ENCODE measurements at regions of chr18 and their contacts with region 1.

Region 1: GRCh38 chr18:13159579-13159978 is 59.0 kb upstream of the LDLRAD4 start:
- DNase-seq: peak; percentile 34
- ATAC-seq: peak; percentile 85
- H3K4me3 Mint-ChIP-seq: no peak overlapping the region
- H3K27ac Mint-ChIP-seq: no peak overlapping the region
- H3K4me1 Mint-ChIP-seq: peaks cover 2% of the 10 kb centered on the region
- H3K27me3 Mint-ChIP-seq: peaks cover 2% of the 10 kb centered on the region
- CTCF ChIP-seq: peak; percentile 92

Region 2: DNA sequence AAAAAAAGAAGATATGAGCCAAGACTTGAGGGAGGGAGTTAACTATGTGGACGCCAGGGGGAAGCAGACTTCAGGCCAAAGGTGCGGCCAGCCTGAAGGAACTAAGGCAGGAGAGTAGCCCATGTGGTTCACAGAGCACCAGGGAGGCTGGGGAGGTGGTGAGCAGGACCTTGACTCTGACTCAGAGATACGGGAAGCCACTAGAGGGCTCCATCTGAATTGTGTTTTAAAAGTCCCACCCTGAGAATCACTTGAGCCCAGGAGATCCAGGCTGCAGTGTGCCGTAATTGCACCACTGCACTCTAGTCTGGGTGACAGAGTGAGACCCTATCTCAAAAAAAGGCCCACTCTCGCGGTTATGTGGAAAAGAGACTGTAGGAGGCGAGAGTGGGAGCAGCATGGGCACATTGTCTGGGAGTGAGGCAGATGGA is 156.1 kb before region 1 on chr18:
- CTCF ChIA-PET with region 1: interaction called, 4 read pairs
- POLR2A ChIA-PET with region 1: no interaction called
- intact Hi-C with region 1: loop called (anchors 5 kb)
- DNase-seq: peak; percentile 44
- ATAC-seq: peak; percentile 52
- H3K4me3 Mint-ChIP-seq: no peak overlapping the region
- H3K27ac Mint-ChIP-seq: no peak overlapping the region
- H3K4me1 Mint-ChIP-seq: peaks cover 19% of the 10 kb centered on the region
- H3K27me3 Mint-ChIP-seq: no peaks in the 10 kb centered on the region
- CTCF ChIP-seq: peak; percentile 46

Region 3: DNA sequence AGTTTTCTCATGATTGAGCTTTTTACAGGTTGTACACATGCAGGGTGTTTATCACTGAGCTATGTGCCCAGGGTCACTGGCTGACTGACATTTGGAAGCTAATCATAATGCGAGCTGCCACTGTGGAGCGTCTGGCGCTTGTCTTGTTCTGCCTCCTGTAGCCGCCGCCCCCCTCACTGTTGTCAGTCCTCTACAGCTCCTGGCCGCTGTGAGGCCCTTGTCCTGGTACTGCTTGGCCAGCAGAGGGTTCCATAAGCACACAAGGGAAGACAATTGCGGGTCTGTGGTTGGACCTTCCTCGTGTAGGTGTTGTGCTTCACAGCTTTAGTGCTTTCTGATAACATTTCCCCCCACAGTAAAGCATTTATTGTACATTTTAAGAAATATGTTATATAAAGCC is 46.6 kb before region 1 on chr18:
- CTCF ChIA-PET with region 1: interaction called, 17 read pairs
- POLR2A ChIA-PET with region 1: no interaction called
- intact Hi-C with region 1: no loop called
- DNase-seq: peak; percentile 50
- ATAC-seq: peak; percentile 82
- H3K4me3 Mint-ChIP-seq: no peak overlapping the region
- H3K27ac Mint-ChIP-seq: no peak overlapping the region
- H3K4me1 Mint-ChIP-seq: no peaks in the 10 kb centered on the region
- H3K27me3 Mint-ChIP-seq: no peaks in the 10 kb centered on the region
- CTCF ChIP-seq: peak; percentile 26

Region 4: DNA sequence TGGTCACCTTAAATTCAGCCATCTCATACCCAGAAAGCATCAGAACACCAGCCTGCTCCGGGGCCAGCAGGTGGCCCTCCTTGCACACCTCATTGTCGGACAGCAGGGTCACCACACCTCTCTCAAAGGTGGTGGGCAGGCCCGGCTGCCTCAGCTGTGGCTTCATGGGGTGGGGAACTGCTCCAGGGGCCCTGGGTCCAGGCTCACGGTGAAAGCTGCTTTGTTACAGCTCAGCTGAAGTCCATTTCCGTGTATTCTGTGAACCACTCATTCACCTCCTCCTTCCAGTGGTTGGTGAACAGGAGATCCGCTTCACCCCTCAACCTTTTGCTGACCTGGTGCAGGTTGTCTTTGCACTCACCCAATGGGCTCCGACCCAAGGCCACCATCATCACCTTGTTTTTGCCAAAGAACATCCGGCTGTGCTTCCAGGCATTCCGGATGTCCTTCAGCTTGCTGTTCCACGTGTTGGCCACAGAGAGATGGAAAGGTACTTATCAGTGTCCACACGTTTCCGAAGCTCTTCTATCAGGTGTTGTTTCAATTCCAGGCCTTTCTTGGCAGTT is 19.6 kb before region 1 on chr18:
- CTCF ChIA-PET with region 1: interaction called, 12 read pairs
- POLR2A ChIA-PET with region 1: interaction called, 5 read pairs
- intact Hi-C with region 1: no loop called
- DNase-seq: peak; percentile 18
- ATAC-seq: no peak
- H3K4me3 Mint-ChIP-seq: no peak overlapping the region
- H3K27ac Mint-ChIP-seq: no peak overlapping the region
- H3K4me1 Mint-ChIP-seq: peaks cover 29% of the 10 kb centered on the region
- H3K27me3 Mint-ChIP-seq: no peaks in the 10 kb centered on the region
- CTCF ChIP-seq: no peak

Region 5: GRCh38 chr18:13175754-13176210 is 16.2 kb after region 1 on chr18:
- CTCF ChIA-PET with region 1: interaction called, 39 read pairs
- POLR2A ChIA-PET with region 1: no interaction called
- intact Hi-C with region 1: no loop called
- DNase-seq: peak; percentile 19
- ATAC-seq: no peak
- H3K4me3 Mint-ChIP-seq: no peak overlapping the region
- H3K27ac Mint-ChIP-seq: no peak overlapping the region
- H3K4me1 Mint-ChIP-seq: peaks cover 29% of the 10 kb centered on the region
- H3K27me3 Mint-ChIP-seq: peaks cover 2% of the 10 kb centered on the region
- CTCF ChIP-seq: no peak

Measured in activated CD8-positive, alpha-beta T cell treated with anti-CD3 and anti-CD28 coated beads for 36 hours (primary cell).